ENCODE measurements at regions of chr10 and their contacts with region 1.

Region 1: DNA sequence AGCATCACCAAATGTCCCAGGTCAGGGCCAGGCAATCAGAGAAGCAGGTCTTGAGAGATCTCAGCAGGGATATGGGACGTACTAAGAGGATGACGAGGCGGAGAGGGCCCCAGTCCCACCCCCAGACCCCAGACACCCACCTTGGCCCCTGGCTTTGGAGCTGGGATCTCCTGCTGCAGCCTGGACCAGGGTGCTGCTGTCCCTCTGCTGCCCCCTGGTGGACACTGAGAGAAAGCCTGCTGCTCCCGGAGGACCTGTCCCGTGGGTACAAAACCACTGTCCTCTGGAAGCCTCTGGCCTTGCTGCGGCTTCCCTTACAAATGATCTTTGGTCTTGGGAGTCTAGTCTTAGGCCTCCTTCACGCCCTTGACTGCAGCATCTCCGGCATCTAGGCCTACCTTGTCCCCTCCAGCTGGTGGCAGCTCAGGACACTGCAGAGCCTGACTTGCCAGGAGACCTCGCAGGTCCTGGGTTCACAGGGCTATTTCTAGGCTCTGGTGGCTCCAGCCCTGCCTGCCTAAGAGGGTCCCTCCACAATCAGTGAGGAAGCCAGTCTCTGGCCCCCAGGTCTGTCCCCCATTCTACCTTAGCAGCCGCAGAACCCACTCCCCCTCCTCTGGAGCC is 97.1 kb downstream of the RGS10 start:
- DNase-seq: peak; percentile 81
- H3K27ac ChIP-seq: no peak overlapping the region
- CTCF ChIP-seq: peak; percentile 97

Region 2: DNA sequence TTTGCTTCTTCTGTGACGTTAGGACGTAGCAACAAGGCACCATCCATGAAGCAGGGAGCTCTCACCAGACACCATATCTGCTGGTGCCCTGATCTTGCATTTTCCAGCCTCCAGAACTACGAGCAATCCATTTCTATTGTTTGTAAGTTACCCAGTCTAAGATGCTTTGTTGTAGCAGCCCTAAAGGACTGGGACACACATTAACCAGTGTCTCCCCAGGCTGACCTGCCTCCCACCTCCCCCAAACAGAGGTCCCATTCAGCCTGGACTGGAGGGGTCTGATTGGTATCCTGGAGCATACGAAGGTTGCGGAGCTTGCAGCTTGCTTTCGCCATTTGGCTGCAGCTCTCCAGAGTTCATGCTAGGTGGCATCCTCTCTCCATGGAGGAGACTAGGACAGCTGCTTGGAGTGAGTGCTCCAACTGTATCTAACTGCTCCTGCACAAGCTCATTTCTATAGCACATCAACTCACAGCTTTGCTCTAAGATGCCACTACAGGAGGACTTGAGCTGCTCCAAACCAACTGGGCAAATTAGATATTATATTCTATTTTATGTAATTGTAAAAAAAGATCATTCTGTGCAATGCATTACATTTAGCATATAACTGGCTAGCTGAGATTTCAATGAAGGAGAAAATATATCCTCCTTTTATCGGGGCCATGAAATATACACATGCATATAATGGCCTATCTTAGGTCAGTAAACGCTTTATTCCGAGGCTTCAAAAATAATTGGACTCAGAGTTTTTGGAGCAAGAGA is 246.0 kb before region 1 on chr10:
- CTCF ChIA-PET with region 1: interaction called, 17 read pairs
- POLR2A ChIA-PET with region 1: no interaction called
- DNase-seq: peak; percentile 64
- H3K27ac ChIP-seq: no peak overlapping the region
- CTCF ChIP-seq: peak; percentile 78

Region 3: DNA sequence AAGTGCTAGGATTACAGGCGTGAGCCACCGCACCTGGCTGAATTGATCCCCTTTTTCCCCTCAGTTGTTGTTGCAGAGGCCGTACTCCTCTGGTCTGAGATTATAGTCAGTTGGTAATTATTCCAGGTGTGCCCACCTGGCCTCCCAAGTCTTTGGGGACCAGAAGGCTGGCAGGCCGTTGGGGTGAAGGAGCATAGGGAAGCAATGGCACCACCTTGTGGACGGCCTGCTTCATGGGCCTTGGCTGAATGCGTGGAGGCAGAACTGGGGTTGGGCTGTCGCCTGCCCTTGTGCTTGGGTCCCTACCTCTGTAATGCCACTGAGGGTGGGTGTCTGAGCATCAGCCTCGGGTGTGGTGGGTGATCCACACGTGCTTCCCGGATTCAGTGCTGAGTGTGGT is 28.6 kb before region 1 on chr10:
- CTCF ChIA-PET with region 1: interaction called, 12 read pairs
- POLR2A ChIA-PET with region 1: no interaction called
- DNase-seq: peak; percentile 87
- H3K27ac ChIP-seq: no peak overlapping the region
- CTCF ChIP-seq: peak; percentile 71

Region 4: GRCh38 chr10:119421887-119422681 is 23.3 kb before region 1 on chr10:
- CTCF ChIA-PET with region 1: interaction called, 12 read pairs
- POLR2A ChIA-PET with region 1: no interaction called
- DNase-seq: no peak
- H3K27ac ChIP-seq: peak overlapping the region; percentile 40; the same call in 1 of the 2 replicates
- CTCF ChIP-seq: no peak

Region 5: GRCh38 chr10:119457966-119458766 is 12.7 kb after region 1 on chr10:
- CTCF ChIA-PET with region 1: interaction called, 12 read pairs
- POLR2A ChIA-PET with region 1: no interaction called
- DNase-seq: no peak
- H3K27ac ChIP-seq: no peak overlapping the region
- CTCF ChIP-seq: no peak

Region 6: DNA sequence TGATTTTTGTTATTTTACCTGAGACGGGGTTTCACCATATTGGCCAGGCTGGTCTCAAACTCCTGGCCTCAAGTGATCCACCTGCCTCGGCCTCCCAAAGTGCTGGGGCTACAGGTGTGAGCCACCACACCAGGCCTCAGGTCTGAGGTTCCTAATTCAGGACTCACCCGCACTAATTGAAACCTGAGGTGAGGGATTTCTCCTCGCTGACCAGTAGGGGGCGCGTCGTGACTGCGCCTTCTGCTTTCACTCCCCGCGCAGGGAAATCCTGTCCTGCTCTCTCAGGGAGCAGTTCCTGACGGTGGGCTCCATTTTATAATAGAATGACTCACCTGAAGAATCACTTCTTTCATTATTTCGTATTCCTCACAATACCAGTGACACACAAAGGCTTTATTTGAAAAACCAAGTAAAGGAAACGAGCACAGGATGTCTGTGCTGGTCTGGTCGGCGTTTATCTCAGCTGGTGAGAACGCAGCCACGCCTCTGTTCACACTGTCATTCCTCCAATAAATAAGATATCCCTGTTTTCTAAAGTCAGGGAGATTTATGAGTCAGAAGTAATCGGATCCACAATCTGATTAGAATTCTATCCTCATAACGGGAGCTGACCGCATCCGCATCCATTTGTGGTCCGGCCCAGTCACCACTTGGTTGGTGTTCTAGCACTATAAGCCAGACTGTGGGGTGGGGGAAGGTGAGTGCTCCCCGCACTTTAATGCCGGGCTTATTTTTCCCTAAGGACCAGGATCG is 241.2 kb after region 1 on chr10:
- CTCF ChIA-PET with region 1: no interaction called
- POLR2A ChIA-PET with region 1: no interaction called
- DNase-seq: peak; percentile 78
- H3K27ac ChIP-seq: peak overlapping the region; percentile 74
- CTCF ChIP-seq: peak; percentile 94

Measured in RWPE1 (cell line).